A549 (cell line): ENCODE measurements at regions of chr16 and their contacts with region 1.

Region 1: GRCh38 chr16:352547-353403 is at the start of gene AXIN1:
- DNase-seq: peak; percentile 59 to 98
- ATAC-seq: peak; percentile 62 to 86
- H3K4me3 ChIP-seq: peak within 1 kb of the TSS; percentile 89
- H3K27ac ChIP-seq: peak within 1 kb of the TSS; percentile 87 to 98
- H3K4me1 ChIP-seq: peaks cover 13% of the 10 kb centered on the region; the same call in 2 of the 3 replicates
- CTCF ChIP-seq: peak; percentile 62
- EP300 ChIP-seq: no peak
- POLR2A ChIP-seq: peak; percentile 64
- RAD21 ChIP-seq: peak; percentile 32 to 65; a peak in 4 of 5 replicates
- polyA plus RNA-seq, gene AXIN1: 8.7 and 8.9 TPM in 2 replicates

Region 2: DNA sequence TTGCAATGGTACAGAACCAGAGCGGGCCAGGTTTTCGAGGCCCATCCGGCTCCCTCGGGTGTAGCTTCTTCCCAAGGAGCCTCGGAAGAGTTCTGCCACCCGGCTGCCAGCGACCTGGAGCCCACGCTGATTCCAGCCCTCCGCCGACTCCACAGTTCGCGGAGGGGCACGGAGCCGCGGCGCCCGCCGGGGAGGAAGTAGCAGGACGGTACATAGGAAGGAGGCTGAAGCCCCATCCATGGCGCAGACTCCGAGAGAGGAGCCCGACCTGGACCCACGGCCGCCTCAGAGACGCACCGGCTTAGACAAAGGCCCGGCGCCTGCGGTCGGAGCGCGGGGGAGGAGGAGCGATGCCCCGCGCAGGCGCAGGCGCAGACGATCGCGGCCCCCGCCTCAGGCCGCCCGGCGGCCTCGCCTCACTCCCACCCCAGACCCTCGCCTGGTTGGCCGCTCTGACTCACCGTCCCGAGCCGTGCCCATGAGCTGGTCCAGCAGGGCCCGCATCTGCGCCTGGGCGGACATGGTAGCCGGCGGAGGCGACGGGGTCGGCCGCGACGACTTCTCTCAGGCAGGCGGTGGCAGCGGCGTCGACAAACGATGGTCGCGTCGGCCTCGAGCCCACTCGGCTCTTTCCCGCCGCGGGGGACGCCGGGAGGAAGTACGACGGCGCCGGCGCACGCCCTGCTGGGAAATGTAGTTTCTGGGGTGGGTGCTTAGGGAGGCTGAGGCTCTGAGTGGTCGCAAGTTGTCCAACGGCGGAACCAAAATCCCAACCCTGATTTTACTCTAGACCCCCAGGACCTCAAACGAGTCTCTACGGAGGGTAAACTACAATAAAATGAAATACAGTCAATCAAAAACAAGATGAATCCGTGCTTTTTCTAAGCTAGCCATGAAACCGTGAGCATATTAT is 123.7 kb before region 1 on chr16 and contains the start of gene LUC7L:
- CTCF ChIA-PET with region 1: no interaction called
- POLR2A ChIA-PET with region 1: interaction called, 11 read pairs
- DNase-seq: peak; percentile 90 to 91
- ATAC-seq: peak; percentile 96
- H3K4me3 ChIP-seq: peak within 1 kb of the TSS; percentile 75
- H3K27ac ChIP-seq: peak within 1 kb of the TSS; percentile 95 to 98
- H3K4me1 ChIP-seq: peaks cover 15% of the 10 kb centered on the region
- CTCF ChIP-seq: no peak
- EP300 ChIP-seq: no peak
- POLR2A ChIP-seq: peak; percentile 95
- RAD21 ChIP-seq: no peak
- polyA plus RNA-seq, gene LUC7L: 34.5 and 51.6 TPM in 2 replicates

Region 3: GRCh38 chr16:234468-235305 is 118.1 kb before region 1 on chr16 and contains the start of gene FAM234A:
- CTCF ChIA-PET with region 1: interaction called, 4 read pairs
- POLR2A ChIA-PET with region 1: interaction called, 11 read pairs
- DNase-seq: peak; percentile 91 to 95
- ATAC-seq: peak; percentile 88 to 91
- H3K4me3 ChIP-seq: peak within 1 kb of the TSS; percentile 78
- H3K27ac ChIP-seq: peak within 1 kb of the TSS; percentile 93 to 96
- H3K4me1 ChIP-seq: 0 out of 3 replicates have a peak, but pooled peaks cover 2% of the 10 kb centered on the region
- CTCF ChIP-seq: peak; percentile 57
- EP300 ChIP-seq: no peak
- POLR2A ChIP-seq: peak; percentile 74
- RAD21 ChIP-seq: 0 out of 5 replicates have a peak, but pooled peaks of 1 of the 2 experiments have one; percentile 41
- polyA plus RNA-seq, gene FAM234A: 25.6 and 27.4 TPM in 2 replicates

Region 4: GRCh38 chr16:377151-377951 is 24.6 kb after region 1 on chr16:
- CTCF ChIA-PET with region 1: no interaction called
- POLR2A ChIA-PET with region 1: no interaction called
- DNase-seq: no peak
- ATAC-seq: no peak
- H3K4me3 ChIP-seq: no peak overlapping the region
- H3K27ac ChIP-seq: no peak overlapping the region
- H3K4me1 ChIP-seq: peaks cover 5% of the 10 kb centered on the region; the same call in 2 of the 3 replicates
- CTCF ChIP-seq: no peak
- EP300 ChIP-seq: no peak
- POLR2A ChIP-seq: no peak
- RAD21 ChIP-seq: no peak